Keratinocyte (primary cell): ENCODE measurements at regions of chr12 and their contacts with region 1.

Region 1: DNA sequence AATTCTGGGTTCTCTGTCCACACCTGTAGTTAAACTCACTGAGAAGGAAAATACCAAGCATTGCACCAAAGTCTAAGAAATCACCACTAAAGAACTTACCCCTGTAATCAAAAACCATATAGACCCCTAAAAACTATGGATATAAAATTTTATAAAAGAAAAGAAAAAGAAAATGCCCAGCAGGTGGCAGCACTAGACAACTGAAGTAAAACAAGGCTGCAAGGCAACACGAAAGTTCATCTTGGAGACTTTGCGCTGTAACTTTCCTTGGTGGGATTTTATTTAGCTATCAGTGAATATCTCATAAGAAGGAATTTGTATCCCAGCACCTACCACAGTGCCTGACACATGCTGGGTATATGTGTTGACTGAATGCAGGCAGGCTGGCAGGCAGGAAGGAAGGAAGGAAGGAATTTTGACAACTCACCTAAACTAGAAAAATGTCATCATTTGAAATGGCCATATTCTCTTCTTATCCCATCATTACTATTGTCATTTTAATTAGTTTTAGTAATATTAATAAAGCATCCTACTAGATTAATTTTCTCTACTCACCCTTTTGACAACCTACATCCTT is 68.2 kb upstream of the ETV6 start:
- DNase-seq: no peak
- H3K4me3 ChIP-seq: no peak overlapping the region
- H3K27ac ChIP-seq: no peak overlapping the region
- H3K4me1 ChIP-seq: peaks cover 36% of the 10 kb centered on the region
- H3K27me3 ChIP-seq: peaks cover 12% of the 10 kb centered on the region
- CTCF ChIP-seq: peak in 2 of 3 experiments; percentile 19 to 47

Region 2: DNA sequence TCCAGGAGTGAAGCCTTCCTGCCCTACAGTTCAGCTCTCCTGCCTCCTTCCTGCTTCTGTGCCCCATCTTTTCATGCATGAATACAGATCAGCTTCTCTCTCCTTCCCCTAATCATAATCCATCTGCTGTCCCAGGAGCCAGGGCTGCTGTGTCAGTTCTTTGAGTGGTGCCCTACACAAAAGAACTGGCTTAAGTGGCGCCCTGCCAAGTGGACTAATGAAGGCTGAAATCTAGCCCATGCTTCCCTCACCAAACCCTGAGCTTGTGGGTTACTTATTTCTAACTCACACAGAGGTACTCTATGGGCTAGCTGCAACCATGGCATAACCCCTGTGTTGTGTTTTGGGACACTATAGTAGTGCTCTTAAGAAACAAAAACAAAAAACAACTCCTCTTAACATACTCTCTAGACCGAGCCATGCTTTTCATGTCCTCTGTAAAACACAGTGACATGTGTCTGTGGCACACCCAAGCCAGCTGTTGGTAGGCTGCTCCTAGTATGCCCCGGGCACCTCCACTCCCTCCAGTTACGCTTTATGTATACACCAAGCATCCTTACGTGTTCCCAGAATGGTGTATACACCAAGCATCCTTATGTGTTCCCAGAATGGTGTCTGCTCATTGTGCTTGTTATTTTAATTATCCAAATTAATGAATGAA is 48.9 kb after region 1 on chr12:
- dilution Hi-C with region 1: no loop called
- DNase-seq: no peak
- H3K4me3 ChIP-seq: no peak overlapping the region
- H3K27ac ChIP-seq: no peak overlapping the region
- H3K4me1 ChIP-seq: peaks cover 8% of the 10 kb centered on the region
- H3K27me3 ChIP-seq: no peaks in the 10 kb centered on the region
- CTCF ChIP-seq: no peak

Region 3: DNA sequence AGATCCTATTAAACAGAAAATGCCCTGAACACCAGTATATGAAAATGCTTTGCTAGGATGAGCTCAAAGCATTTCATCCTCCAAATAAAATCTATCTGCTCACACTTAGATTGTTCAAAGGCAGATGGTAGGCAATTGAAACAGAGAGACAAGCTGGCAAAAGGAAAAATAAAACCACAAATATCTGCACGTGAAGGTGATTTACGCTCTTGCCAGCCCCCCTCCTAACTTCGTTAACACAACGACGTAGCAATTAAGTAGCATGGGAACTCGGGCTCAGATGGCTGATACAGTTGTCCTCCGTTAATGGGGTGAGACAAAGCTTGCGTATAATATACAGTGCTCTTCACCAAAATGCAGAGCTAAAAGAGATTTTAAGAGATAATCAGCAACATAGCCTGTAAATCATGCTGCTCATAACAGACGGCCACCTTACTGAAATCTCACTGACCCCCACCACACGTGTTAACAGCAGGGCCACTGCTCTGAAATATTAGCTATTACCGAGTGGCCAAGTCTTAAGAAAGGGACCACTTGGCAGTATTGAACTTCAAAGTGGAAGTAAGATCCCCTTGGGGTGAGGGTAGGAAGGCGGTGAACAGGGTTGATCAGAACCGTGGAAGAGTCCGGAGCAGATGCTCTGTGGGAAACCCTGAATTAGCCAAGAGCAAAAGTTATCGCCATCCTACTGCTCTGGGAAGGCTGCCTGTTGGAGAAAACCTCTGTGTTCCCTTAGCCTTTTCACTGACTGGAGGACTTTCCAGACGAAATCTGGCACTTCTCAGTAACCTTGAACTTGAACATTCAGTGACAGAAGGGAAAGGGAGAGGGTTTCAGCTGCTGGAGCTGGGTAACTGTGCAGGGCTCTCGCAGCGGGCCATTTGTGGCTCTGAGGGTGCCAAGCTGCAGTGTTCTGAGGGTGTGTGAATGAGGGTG is 91.3 kb after region 1 on chr12:
- dilution Hi-C with region 1: no loop called
- DNase-seq: no peak
- H3K4me3 ChIP-seq: no peak overlapping the region
- H3K27ac ChIP-seq: no peak overlapping the region
- H3K4me1 ChIP-seq: no peaks in the 10 kb centered on the region
- H3K27me3 ChIP-seq: no peaks in the 10 kb centered on the region
- CTCF ChIP-seq: no peak

Region 4: GRCh38 chr12:12032851-12033588 is 451.8 kb after region 1 on chr12:
- dilution Hi-C with region 1: loop called (anchors 25 kb)
- DNase-seq: peak; percentile 68
- H3K4me3 ChIP-seq: peak overlapping the region; percentile 17 to 52 (median 20)
- H3K27ac ChIP-seq: no peak overlapping the region
- H3K4me1 ChIP-seq: peaks cover 11% of the 10 kb centered on the region
- H3K27me3 ChIP-seq: no peaks in the 10 kb centered on the region
- CTCF ChIP-seq: peak; percentile 77 to 89 (median 85)